ENCODE measurements at regions of chr5 and their contacts with region 1.

Region 1: DNA sequence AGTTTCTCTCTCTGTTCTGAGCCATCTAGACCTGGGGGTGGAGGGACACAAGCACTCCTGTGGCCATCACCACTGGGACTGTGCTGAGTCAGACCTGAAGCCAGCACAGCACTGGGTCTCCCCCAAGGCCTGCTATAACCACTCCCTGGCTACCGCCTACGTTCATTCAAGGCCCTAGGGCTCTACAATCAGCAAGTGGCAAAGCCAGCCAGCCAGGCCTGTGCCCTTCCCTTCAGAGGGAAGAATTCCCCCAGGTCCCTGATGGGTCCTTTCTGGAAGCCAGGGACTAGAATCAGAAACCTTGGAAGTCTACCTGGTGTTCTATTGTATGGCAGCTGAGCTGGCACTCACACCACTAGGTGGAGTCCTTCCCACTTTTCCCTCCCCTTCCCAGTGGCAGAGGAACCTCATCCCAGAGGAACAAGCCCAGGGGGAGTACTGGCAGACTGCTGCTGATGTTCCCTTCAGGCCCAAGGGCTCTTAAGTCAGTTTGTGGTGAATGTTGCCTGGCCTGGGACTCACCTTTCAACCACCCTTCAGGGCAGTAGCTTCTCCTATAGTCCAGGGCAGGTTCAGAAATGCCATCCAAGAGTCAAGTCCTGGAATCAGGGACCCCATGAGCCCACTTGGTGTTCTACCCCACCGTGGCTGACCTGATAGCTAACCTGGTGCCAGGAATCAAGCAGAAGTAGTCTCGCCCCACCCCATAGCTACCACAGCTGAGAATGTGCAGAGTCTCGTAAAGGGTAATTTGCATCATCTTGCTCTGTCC is 20.0 kb downstream of the JMY start:
- DNase-seq: no peak
- ATAC-seq: peak; percentile 43 to 68 (median 61)
- H3K4me3 ChIP-seq: no peak overlapping the region
- H3K27ac ChIP-seq: no peak overlapping the region
- H3K4me1 ChIP-seq: peaks cover 0 to 28% (median 7%) of the 10 kb centered on the region in 12 donors
- H3K27me3 ChIP-seq: no peaks in the 10 kb centered on the region
- CTCF ChIP-seq: peak in 11 of 12 donors; percentile 25 to 58 (median 38)
- POLR2A ChIP-seq: no peak

Region 2: GRCh38 chr5:79318935-79319614 is 63.1 kb after region 1 on chr5:
- intact Hi-C with region 1: no loop called
- DNase-seq: no peak
- ATAC-seq: peak; percentile 60 to 98 (median 80)
- H3K4me3 ChIP-seq: no peak overlapping the region
- H3K27ac ChIP-seq: no peak overlapping the region
- H3K4me1 ChIP-seq: peaks cover 0 to 3% (median 0%) of the 10 kb centered on the region in 12 donors
- H3K27me3 ChIP-seq: no peaks in the 10 kb centered on the region
- CTCF ChIP-seq: no peak
- POLR2A ChIP-seq: no peak

Region 3: GRCh38 chr5:79464695-79465332 is 208.8 kb after region 1 on chr5:
- intact Hi-C with region 1: loop called in 1 of 10 experiments (anchors 5 kb)
- DNase-seq: no peak
- ATAC-seq: peak in 2 of 4 donors; percentile 36 to 56
- H3K4me3 ChIP-seq: no peak overlapping the region
- H3K27ac ChIP-seq: no peak overlapping the region
- H3K4me1 ChIP-seq: peaks cover 0 to 22% (median 2%) of the 10 kb centered on the region in 12 donors
- H3K27me3 ChIP-seq: no peaks in the 10 kb centered on the region
- CTCF ChIP-seq: peak; percentile 26 to 69 (median 55)
- POLR2A ChIP-seq: no peak

Region 4: DNA sequence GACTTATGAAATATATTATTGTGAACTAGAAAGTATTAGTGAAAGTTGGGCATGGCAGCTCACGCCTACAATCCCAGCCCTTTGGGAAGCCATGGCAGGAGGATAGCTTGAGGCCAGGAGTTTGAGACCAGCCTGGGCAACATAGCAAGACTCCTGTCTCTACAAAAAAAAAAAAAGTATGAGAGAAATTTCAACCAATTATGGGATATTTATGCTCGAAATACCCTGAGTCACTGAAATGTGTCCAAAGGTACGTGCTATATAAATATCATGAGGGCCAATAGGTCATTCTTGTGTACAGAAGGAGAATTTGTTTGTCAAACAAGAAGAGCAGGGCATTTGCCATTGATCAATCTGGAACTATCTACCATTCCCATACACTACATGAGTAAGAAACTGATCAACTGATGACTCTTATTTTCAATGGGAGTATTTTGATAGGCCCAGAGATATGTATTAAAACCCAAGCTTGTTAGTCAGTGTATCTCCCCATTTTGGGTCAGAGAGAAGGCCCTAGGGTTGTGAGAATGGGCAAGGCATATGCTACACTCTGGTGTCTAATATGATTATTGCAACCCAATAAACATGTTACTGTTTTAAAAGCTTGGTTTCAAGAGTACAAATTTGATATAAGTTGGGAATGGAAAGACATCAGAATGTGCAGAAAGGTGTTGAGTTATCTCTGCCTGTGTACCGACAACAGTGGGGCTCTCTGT is 279.7 kb after region 1 on chr5:
- intact Hi-C with region 1: loop called in 1 of 10 experiments (anchors 10 kb)
- DNase-seq: no peak
- ATAC-seq: peak in 2 of 4 donors; percentile 54 to 58
- H3K4me3 ChIP-seq: no peak overlapping the region
- H3K27ac ChIP-seq: no peak overlapping the region
- H3K4me1 ChIP-seq: no peaks in the 10 kb centered on the region
- H3K27me3 ChIP-seq: no peaks in the 10 kb centered on the region
- CTCF ChIP-seq: peak in 11 of 12 donors; percentile 6 to 55 (median 42)
- POLR2A ChIP-seq: no peak

Measured in heart left ventricle (tissue), 16 donors.